ENCODE measurements at regions of chr3 and their contacts with region 1.

Region 1: GRCh38 chr3:155870133-155870944 is at the start of gene GMPS:
- DNase-seq: peak; percentile 93 to 98 (median 96)
- H3K4me3 ChIP-seq: peak within 1 kb of the TSS; percentile 95
- H3K4me3 Mint-ChIP-seq: peak within 1 kb of the TSS; percentile 91 to 96 (median 94)
- H3K27ac ChIP-seq: peak within 1 kb of the TSS; percentile 88
- H3K27ac Mint-ChIP-seq: peak within 1 kb of the TSS; percentile 84 to 99 (median 96)
- H3K4me1 ChIP-seq: peaks cover 26% of the 10 kb centered on the region
- H3K4me1 Mint-ChIP-seq: peaks cover 28 to 33% (median 28%) of the 10 kb centered on the region in 3 donors
- H3K27me3 ChIP-seq: no peaks in the 10 kb centered on the region
- H3K27me3 Mint-ChIP-seq: no peaks in the 10 kb centered on the region
- total RNA-seq, gene GMPS: 113 to 117 TPM

Region 2: DNA sequence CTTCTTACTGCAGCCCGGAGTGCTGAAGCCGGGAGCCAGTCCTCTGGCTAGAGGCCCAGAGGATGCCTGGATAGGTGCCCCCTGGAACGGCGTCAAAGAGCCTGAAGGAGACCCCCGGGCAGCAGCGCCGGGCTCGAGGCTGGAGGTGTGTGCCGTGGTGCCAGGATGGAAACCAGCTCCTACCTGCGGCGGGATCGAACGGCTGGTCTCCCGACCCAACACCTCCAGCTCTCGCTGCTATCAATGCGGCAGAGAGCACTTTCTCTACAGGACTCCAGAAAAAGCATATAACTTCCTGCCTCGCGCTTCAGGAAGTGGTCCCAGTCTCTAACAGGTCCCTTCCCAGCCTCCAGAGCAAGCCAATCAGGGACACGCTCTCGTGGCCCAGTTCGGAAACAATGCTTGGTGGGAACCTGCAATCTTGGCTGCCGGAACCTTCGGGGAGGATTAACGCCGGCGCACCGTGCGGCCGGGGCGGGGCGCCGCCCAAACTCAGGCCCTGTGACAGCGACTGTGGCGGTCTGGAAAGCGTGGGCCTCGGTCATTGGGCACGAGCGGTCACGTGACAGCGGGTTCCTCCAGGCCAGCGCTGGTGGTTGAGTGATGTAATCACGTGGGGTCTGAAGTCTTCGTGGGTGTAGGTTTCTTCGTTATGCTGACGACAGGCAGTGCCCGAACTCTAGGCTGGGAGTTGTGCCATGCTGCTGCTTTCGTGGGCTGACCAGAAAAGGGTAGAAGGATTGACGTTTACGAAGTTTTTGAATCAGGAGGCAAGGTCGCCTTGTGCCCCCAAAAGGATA is 16.0 kb before region 1 on chr3 and contains the start of gene SLC33A1:
- CTCF ChIA-PET with region 1: interaction called, 7 read pairs
- POLR2A ChIA-PET with region 1: interaction called, 11 read pairs
- DNase-seq: peak; percentile 97 to 99 (median 99)
- H3K4me3 ChIP-seq: peak within 1 kb of the TSS; percentile 93
- H3K4me3 Mint-ChIP-seq: peak within 1 kb of the TSS; percentile 86 to 98 (median 97)
- H3K27ac ChIP-seq: peak within 1 kb of the TSS; percentile 96
- H3K27ac Mint-ChIP-seq: peak within 1 kb of the TSS; percentile 96 to 100 (median 100)
- H3K4me1 ChIP-seq: peaks cover 31% of the 10 kb centered on the region
- H3K4me1 Mint-ChIP-seq: peaks cover 33 to 42% (median 41%) of the 10 kb centered on the region in 3 donors
- H3K27me3 ChIP-seq: no peaks in the 10 kb centered on the region
- H3K27me3 Mint-ChIP-seq: no peaks in the 10 kb centered on the region
- total RNA-seq, gene SLC33A1: 22.8 to 24.8 TPM